ENCODE measurements at regions of chr11 and their contacts with region 1.

Region 1: DNA sequence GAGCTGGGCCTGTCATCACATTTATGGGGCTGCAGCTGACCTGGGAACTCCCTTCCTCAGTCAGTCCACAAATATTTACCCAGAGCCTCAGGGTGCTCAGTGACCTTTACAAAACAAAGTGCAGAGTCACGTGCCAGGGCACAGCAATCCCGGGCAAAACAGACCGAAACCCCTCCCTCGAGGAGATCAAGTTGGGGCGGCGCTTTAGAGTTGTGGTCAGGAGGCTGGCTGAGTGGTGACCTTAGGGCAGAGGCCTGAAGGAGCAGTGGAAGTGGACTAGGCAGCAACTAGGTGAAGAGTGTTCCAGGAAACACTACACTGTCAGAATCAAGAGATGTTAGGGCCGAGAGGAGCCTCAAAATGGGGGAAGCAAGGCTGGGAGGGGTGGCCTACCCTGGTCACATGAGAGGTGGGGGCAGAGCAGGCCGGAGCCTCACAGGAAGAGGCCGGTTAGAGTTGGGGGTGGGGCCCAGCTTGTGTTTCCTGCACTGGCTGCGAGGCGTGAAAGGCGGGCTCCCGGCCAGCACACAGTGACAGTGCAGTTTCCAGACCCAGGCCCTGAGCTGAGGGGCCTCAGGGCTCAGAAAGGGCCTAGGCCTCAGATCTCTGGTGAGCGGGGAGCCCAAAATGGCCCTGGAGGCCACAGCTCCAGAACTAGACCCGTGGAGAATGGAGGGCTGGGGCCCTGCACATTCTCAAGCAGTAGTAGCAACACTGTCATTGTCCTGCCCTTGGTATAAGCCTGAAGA is 3.7 kb upstream of the NEAT1 start:
- DNase-seq: peak; percentile 88
- CTCF ChIP-seq: no peak

Region 2: GRCh38 chr11:65366340-65366773 is 52.5 kb before region 1 on chr11:
- CTCF ChIA-PET with region 1: interaction called, 13 read pairs
- POLR2A ChIA-PET with region 1: interaction called, 5 read pairs
- DNase-seq: peak; percentile 82
- CTCF ChIP-seq: peak; percentile 69

Region 3: DNA sequence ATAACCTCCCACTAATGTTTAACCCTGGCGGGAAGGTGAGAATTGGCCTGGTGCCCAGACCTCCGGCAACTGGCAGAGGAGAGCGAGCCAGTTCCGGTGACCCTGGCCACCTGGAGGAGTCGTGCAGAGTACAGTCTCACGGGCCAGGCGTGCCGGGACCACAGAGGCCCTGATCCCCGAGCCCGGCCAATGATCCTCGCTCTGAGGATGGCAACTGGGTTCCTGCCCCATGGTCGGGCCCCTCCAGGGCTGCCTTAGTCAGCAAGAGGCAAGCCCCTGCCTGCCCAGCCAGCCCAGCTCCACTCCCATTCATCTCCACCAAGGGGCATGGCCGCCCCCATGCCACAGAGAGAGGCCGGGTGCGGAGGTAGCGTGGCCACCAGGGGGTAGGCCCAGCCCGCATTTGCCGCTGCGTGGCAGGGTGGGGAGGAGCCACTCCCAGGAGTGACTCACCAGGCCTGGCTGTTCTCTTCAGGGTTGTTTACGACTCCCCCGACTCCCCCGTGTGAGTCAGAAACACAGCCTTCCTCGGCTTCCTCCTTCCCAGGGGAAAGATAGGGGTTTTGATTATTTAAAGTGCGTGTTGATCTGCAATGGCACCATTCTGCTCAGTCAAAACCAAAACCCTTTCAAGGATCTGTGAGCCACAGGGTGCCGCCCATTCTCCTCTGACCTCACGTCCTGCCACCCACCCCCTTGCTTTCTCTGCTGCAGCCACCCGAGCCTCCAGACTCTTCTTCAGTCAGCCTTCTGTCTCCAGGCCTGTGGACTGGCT is 36.7 kb before region 1 on chr11 and contains the start of gene SLC25A45:
- CTCF ChIA-PET with region 1: interaction called, 31 read pairs
- POLR2A ChIA-PET with region 1: interaction called, 11 read pairs
- DNase-seq: peak; percentile 79
- CTCF ChIP-seq: peak; percentile 70

Region 4: GRCh38 chr11:65398362-65398910 is 20.4 kb before region 1 on chr11:
- CTCF ChIA-PET with region 1: interaction called, 85 read pairs
- POLR2A ChIA-PET with region 1: interaction called, 4 read pairs
- DNase-seq: no peak
- CTCF ChIP-seq: no peak

Region 5: DNA sequence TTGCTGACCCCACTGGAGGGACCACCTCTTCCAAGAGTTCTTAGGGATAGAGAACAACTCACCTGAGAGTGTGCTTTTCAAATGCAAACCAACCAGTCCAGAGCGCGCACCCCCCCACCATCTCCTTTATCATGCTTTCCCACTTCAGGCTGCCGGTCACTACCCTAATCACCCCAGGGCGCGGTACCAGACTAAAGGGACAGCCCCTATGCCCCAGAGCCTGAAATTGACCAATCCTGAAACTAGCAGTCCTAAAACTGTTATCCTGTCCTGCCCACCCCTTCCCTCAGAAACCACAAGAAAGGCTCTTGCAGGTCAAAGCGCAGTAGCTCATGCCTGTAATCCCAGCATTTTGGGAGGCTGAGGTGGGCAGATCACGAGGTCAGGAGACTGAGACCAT is 40.7 kb after region 1 on chr11:
- CTCF ChIA-PET with region 1: interaction called, 11 read pairs
- POLR2A ChIA-PET with region 1: interaction called, 7 read pairs
- DNase-seq: peak; percentile 37
- CTCF ChIP-seq: no peak

Region 6: GRCh38 chr11:65477149-65477965 is 58.5 kb after region 1 on chr11:
- CTCF ChIA-PET with region 1: interaction called, 61 read pairs
- POLR2A ChIA-PET with region 1: interaction called, 30 read pairs
- DNase-seq: peak; percentile 93
- CTCF ChIP-seq: no peak

Region 7: GRCh38 chr11:65497141-65498041 is 78.5 kb after region 1 on chr11:
- CTCF ChIA-PET with region 1: interaction called, 29 read pairs
- POLR2A ChIA-PET with region 1: interaction called, 620 read pairs
- DNase-seq: peak; percentile 87
- CTCF ChIP-seq: no peak

Measured in GM10248 (cell line).